PC-9 (cell line): ENCODE measurements at regions of chr18 and their contacts with region 1.

Region 1: GRCh38 chr18:54983041-54983686 is 23.9 kb upstream of the CCDC68 start:
- DNase-seq: peak in 1 of 2 experiments; percentile 71
- H3K4me3 ChIP-seq: no peak overlapping the region
- H3K27ac ChIP-seq: no peak overlapping the region
- H3K4me1 ChIP-seq: peaks cover 6% of the 10 kb centered on the region; the same call in 1 of the 2 replicates
- H3K27me3 ChIP-seq: no peaks in the 10 kb centered on the region
- CTCF ChIP-seq: peak; percentile 86

Region 2: DNA sequence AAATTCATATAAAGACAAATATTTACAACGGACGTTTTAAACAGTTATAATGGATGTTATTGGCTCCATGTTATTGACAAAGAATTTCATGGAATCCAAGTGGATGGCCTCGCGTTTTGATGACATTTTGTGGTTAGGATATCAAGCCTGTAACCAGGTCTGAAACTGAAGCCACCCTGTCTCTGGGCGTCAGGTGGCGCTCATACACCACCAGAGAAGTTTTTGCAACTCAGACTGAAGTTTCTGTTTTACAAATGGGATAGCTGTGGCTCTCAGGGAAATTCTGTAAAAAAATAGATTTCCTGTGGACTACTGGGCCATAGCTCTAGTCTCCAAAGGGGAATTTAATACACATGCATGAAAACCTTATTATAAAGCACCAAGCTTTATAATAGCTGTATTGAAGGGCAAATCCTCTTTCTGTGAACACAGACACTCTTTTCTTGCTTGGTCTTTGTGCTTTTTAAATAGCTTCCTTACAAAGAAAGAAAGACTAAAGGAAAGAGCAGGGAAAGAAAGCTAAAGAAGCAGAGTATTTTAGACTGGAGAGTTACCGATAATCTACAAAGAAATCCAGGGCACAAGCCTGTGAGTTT is 538.7 kb before region 1 on chr18:
- CTCF ChIA-PET with region 1: no interaction called
- POLR2A ChIA-PET with region 1: no interaction called
- intact Hi-C with region 1: loop called (anchors 1 kb)
- DNase-seq: peak; percentile 40 to 55
- H3K4me3 ChIP-seq: no peak overlapping the region
- H3K27ac ChIP-seq: no peak overlapping the region
- H3K4me1 ChIP-seq: no peaks in the 10 kb centered on the region
- H3K27me3 ChIP-seq: no peaks in the 10 kb centered on the region
- CTCF ChIP-seq: peak; percentile 86

Region 3: DNA sequence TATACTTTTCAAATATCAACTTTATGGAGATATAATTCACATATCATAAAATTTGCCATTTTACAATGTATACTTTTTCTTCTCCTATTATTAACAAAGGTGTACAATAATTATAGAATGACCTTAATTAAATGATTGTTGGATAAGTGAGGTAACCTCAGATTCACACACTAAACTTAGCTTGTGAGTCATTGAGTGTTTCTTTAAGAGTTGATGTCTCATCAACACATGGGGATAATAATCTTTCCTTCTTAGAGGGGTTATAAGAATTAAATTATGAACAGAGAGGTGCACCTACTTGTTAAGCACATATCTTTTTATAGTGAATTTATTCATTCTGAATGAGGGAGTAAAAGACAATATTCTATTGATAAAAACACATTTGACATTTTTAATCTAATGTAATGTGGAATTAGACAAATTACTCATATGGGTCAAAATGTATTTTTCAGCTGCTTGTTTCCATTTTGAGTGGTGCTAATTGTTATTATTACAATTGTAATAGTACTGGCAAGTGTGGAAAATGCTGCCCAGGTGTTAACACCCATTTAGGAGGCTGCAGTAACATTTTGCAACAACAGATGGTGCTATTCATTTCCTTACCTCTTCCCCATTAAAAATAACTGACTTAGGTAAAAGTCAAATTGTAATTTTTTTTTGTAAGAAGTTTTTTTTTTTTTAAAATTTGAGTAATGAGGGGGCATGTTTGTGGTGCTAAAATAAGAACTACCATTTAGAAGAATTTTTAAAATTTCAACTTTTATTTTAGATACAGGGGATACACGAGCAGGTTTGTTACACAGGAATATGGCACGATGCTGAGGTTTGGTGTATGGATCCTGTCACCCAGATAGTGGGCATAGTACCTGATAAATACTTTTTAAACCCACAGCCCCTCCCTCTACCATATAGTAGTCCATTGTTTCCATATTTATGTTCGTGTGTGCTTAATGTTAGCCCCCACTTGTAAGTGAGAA is 424.3 kb before region 1 on chr18:
- CTCF ChIA-PET with region 1: no interaction called
- POLR2A ChIA-PET with region 1: no interaction called
- intact Hi-C with region 1: loop called (anchors 2 kb)
- DNase-seq: no peak
- H3K4me3 ChIP-seq: no peak overlapping the region
- H3K27ac ChIP-seq: no peak overlapping the region
- H3K4me1 ChIP-seq: no peaks in the 10 kb centered on the region
- H3K27me3 ChIP-seq: no peaks in the 10 kb centered on the region
- CTCF ChIP-seq: peak; percentile 82

Region 4: DNA sequence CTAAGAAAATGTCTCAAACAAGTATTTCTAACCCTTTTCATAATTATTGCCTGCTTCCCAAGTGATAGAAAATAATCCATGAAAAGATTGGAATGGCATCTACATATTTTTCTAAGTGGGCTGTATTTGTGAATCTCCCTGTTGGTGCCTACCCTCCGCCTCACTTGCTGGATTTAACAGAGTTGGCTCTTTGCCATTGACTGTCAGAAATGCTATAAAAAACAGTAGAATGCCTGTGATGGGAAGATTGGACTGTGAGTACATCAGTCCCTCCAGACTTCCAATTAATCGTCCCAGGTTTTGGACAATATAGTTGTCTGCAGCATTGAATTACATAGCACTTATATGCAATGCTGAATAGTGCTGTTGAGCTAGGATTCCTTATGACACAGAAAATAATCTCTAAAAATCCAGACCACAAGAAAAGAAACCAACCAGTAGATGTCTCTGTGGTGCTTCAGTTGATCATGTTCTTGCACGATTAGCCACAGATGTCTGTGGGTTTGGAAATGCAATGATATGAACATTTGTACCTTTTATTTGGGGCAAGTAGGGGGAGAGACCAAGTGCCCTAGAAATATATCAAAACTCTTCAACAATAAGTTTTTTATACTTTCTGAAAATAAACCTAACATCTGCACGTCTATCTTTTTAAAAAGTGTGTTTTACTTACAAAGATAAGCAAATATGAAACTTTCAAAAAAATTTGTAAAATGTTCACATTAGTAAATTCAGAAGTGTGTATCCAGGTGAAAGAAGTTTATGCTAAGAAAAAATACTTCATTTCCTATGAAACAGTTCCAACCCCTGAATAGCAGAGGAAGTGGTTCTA is 303.6 kb before region 1 on chr18:
- CTCF ChIA-PET with region 1: no interaction called
- POLR2A ChIA-PET with region 1: no interaction called
- intact Hi-C with region 1: loop called (anchors 1 kb)
- DNase-seq: peak; percentile 9 to 76
- H3K4me3 ChIP-seq: no peak overlapping the region
- H3K27ac ChIP-seq: no peak overlapping the region
- H3K4me1 ChIP-seq: peaks cover 7% of the 10 kb centered on the region
- H3K27me3 ChIP-seq: no peaks in the 10 kb centered on the region
- CTCF ChIP-seq: peak; percentile 76

Region 5: DNA sequence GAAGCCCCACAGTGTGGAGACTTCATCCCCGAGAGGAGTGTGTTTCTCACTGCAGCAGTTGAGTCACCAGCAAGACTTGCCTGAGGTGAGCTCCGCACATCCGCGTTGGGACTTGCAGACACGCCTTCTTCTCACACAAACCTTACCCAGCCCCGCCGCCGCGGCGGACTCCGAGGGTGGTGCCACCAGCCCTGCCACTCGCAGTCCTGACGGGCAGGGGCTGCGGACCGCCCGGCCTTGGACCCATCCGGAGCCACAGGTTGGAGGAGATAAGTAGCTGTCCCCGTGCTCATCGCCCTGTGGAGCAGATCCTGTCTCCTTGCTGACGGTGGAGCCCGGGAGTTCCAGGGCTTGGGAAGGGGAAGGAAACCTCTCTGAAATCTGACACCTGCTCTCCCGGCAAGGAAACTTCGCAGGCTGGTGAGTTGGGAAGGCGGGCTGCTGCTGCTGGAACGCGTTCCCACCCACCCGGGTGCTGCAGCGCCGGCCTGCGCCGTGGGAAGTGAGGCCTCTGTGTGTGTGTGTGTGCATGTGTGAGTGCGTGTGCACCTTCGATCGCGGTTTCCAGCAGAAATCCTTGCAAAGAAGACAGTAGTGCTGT is 154.8 kb before region 1 on chr18 and contains the start of gene RAB27B:
- CTCF ChIA-PET with region 1: no interaction called
- POLR2A ChIA-PET with region 1: no interaction called
- intact Hi-C with region 1: loop called (anchors 10 kb)
- DNase-seq: peak; percentile 82 to 93
- H3K4me3 ChIP-seq: peak within 1 kb of the TSS; percentile 95
- H3K27ac ChIP-seq: peak within 1 kb of the TSS; percentile 90
- H3K4me1 ChIP-seq: peaks cover 33% of the 10 kb centered on the region
- H3K27me3 ChIP-seq: no peaks in the 10 kb centered on the region
- CTCF ChIP-seq: no peak
- total RNA-seq, gene RAB27B: 9.9 and 12.7 TPM in 2 replicates

Region 6: GRCh38 chr18:55038162-55038561 is 55.0 kb after region 1 on chr18:
- CTCF ChIA-PET with region 1: no interaction called
- POLR2A ChIA-PET with region 1: no interaction called
- intact Hi-C with region 1: no loop called
- DNase-seq: no peak
- H3K4me3 ChIP-seq: no peak overlapping the region
- H3K27ac ChIP-seq: no peak overlapping the region
- H3K4me1 ChIP-seq: no peaks in the 10 kb centered on the region
- H3K27me3 ChIP-seq: no peaks in the 10 kb centered on the region
- CTCF ChIP-seq: no peak